ENCODE measurements at regions of chr20 and their contacts with region 1.

Region 1: DNA sequence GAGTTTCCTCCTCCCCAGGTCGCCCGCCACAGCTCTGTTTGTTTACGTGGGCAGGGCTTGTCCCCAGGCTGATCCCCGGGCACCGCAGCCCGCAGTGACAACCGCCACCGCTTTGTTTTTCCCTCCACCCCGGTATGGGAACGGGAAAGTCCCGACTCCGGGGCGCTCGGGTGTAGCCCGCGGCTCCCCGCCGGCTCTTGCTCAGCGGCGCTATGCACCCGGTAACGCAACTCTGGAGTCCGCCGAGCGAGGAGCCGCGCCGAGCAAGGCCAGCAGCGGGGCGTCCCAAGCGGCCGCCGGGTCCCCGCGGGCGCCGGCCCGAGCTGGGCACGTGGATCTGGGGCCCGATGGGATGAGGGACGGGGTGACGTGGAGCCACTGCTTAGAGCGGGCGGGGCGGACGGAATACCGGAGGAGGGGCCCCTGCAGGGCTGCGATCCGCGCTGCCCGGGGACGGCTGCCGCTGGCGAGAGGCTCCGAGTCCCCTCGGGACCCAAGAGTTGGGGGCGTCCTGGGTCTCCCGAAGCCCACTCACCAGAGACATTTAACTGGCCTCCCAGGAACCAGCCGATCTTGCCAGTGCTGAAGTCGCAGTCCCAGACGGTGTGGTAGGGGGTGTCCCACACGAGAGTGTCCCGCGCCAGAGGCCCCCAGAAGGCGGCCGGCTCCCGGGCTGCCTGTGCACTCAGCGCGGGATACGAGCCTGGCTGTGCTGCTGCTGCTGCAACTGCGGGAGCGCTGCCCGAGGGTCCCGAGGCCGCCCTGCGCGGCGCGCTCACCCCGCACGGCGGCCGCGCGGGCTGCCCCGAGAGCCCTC is 497 bp downstream of the ACSS1 start:
- DNase-seq: peak; percentile 89
- ATAC-seq: peak; percentile 41
- H3K4me3 ChIP-seq: peak overlapping the region; percentile 45 to 91 (median 76)
- H3K4me3 Mint-ChIP-seq: peak overlapping the region; percentile 93
- H3K27ac ChIP-seq: peak overlapping the region; percentile 90 to 93
- H3K27ac Mint-ChIP-seq: peak overlapping the region; percentile 97
- H3K4me1 ChIP-seq: peaks cover 58 to 63% of the 10 kb centered on the region in 2 donors
- H3K4me1 Mint-ChIP-seq: peaks cover 60% of the 10 kb centered on the region
- H3K27me3 ChIP-seq: no peaks in the 10 kb centered on the region
- H3K27me3 Mint-ChIP-seq: no peaks in the 10 kb centered on the region
- CTCF ChIP-seq: no peak

Region 2: DNA sequence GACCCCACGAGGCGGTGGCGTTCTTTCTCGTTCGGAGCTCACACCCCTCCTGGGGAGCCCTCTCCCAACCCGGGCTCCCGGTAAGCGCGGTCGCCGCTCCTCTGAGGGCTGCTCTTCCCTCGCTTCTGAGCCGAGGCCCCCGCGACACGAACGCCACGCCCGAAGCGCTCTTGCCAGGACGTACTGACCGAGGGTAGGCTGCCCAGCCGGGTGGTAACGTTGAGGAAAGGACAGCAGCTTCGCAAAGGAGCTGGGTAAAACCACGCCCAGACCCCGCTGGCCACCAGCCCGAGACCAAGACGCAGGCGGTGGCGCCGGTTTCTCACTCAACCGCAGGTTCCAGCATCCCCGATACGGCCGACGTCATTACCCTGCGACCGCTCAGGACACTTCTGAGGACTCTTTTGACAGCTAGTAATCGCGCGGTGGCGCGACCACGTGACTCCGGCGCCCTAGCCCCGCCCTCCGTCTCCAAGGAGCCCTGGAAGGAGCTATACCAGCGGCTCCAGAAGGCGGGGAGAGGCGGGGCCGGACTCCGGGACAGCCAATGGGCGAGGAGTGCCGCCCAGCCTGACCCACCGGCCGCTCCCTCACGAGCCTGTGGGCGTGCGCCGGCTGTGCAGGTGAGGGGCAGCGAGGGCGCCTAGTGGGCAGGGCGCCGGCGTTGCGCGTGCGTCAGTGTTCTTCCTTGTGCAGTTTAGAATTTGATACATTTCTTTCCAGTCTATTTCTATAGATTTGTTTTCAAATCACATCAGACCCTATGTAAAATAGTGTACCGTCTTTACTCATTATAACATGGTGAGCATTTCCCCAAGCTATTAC is 1699.5 kb before region 1 on chr20:
- CTCF ChIA-PET with region 1: no interaction called
- POLR2A ChIA-PET with region 1: no interaction called
- intact Hi-C with region 1: loop called (anchors 5 kb)
- DNase-seq: peak; percentile 100
- ATAC-seq: peak; percentile 75
- H3K4me3 ChIP-seq: peak overlapping the region; percentile 68 to 88 (median 83)
- H3K4me3 Mint-ChIP-seq: peak overlapping the region; percentile 94
- H3K27ac ChIP-seq: peak overlapping the region; percentile 94 to 98
- H3K27ac Mint-ChIP-seq: peak overlapping the region; percentile 97
- H3K4me1 ChIP-seq: peaks cover 20 to 33% of the 10 kb centered on the region in 2 donors
- H3K4me1 Mint-ChIP-seq: peaks cover 33% of the 10 kb centered on the region
- H3K27me3 ChIP-seq: no peaks in the 10 kb centered on the region
- H3K27me3 Mint-ChIP-seq: no peaks in the 10 kb centered on the region
- CTCF ChIP-seq: no peak

Region 3: GRCh38 chr20:25032478-25033280 is 24.8 kb before region 1 on chr20:
- CTCF ChIA-PET with region 1: interaction called, 10 read pairs
- POLR2A ChIA-PET with region 1: interaction called, 20 read pairs
- intact Hi-C with region 1: no loop called
- DNase-seq: no peak
- ATAC-seq: no peak
- H3K4me3 ChIP-seq: no peak overlapping the region
- H3K4me3 Mint-ChIP-seq: no peak overlapping the region
- H3K27ac ChIP-seq: no peak overlapping the region
- H3K27ac Mint-ChIP-seq: no peak overlapping the region
- H3K4me1 ChIP-seq: peaks cover 27% of the 10 kb centered on the region in 2 donors
- H3K4me1 Mint-ChIP-seq: peaks cover 40% of the 10 kb centered on the region
- H3K27me3 ChIP-seq: no peaks in the 10 kb centered on the region
- H3K27me3 Mint-ChIP-seq: no peaks in the 10 kb centered on the region
- CTCF ChIP-seq: no peak

Region 4: DNA sequence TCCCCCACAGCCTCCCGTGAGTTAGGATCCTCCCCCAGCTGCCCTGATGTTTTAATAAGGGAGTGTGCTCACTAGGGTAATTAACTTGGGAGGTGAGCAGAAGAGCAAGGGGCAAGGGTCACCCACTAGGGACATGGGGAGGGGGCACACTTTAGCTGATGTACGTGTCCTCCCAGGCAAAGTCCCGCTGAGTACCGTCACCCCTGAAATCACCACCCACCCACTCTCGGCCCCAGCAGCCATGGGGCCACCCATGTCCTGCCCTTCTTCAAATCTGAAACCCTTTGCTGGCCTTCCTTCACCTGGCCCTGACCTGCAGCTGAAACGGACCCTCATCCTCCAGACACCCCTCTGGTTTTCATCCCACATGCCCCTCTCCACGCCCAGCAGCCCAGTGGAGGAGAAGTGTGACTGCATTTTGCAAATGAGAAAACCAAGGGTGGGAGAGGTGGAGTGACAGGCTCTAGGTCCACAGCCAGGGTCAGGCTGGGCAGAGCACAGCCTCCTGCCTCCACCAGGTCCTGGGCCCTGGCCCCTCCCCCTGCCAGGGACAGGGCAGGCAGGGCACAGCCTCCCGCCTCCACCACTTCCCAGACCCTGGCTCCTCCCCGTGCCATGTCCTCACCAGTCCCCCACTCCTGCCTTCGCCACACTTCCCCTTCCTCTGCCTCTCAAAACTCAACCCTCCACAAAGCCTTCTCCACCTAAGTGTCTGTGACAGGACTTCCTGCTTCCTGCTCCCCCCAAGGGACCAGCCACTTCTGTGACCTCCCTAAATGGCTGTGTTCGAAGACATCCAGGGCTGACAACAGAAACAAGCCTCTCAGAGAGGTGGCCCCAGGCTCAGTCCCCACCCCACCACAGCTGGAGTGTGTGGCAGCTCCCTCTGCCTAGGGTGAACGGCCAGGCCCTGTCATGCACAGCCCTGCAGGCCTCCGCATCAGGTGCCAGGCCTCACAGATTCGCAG is 14.6 kb before region 1 on chr20:
- CTCF ChIA-PET with region 1: interaction called, 4 read pairs
- POLR2A ChIA-PET with region 1: interaction called, 27 read pairs
- intact Hi-C with region 1: loop called (anchors 1 kb)
- DNase-seq: peak; percentile 85
- ATAC-seq: peak; percentile 90
- H3K4me3 ChIP-seq: peak overlapping the region in 4 of 5 experiments; percentile 5 to 25 (median 18)
- H3K4me3 Mint-ChIP-seq: peak overlapping the region; percentile 72
- H3K27ac ChIP-seq: peak overlapping the region; percentile 92 to 93
- H3K27ac Mint-ChIP-seq: peak overlapping the region; percentile 90
- H3K4me1 ChIP-seq: peaks cover 58 to 62% of the 10 kb centered on the region in 2 donors
- H3K4me1 Mint-ChIP-seq: peaks cover 63% of the 10 kb centered on the region
- H3K27me3 ChIP-seq: no peaks in the 10 kb centered on the region
- H3K27me3 Mint-ChIP-seq: no peaks in the 10 kb centered on the region
- CTCF ChIP-seq: no peak

Region 5: GRCh38 chr20:25195014-25195961 is 137.8 kb after region 1 on chr20 and contains the start of gene ENTPD6:
- CTCF ChIA-PET with region 1: no interaction called
- POLR2A ChIA-PET with region 1: interaction called, 3 read pairs
- intact Hi-C with region 1: loop called (anchors 1 kb)
- DNase-seq: peak; percentile 95
- ATAC-seq: peak; percentile 85
- H3K4me3 ChIP-seq: peak within 1 kb of the TSS; percentile 55 to 91 (median 88)
- H3K4me3 Mint-ChIP-seq: peak within 1 kb of the TSS; percentile 94
- H3K27ac ChIP-seq: peak within 1 kb of the TSS; percentile 63 to 86
- H3K27ac Mint-ChIP-seq: peak within 1 kb of the TSS; percentile 92
- H3K4me1 ChIP-seq: peaks cover 15 to 24% of the 10 kb centered on the region in 2 donors
- H3K4me1 Mint-ChIP-seq: peaks cover 37% of the 10 kb centered on the region
- H3K27me3 ChIP-seq: no peaks in the 10 kb centered on the region
- H3K27me3 Mint-ChIP-seq: peaks cover 1% of the 10 kb centered on the region
- CTCF ChIP-seq: no peak
- total RNA-seq, gene ENTPD6: 64.4 and 71.3 TPM in 2 replicates

Region 6: GRCh38 chr20:25623736-25624499 is 566.5 kb after region 1 on chr20 and contains the start of gene NANP:
- CTCF ChIA-PET with region 1: no interaction called
- POLR2A ChIA-PET with region 1: no interaction called
- intact Hi-C with region 1: loop called (anchors 5 kb)
- DNase-seq: peak; percentile 95
- ATAC-seq: peak; percentile 84
- H3K4me3 ChIP-seq: peak within 1 kb of the TSS; percentile 70 to 97 (median 89)
- H3K4me3 Mint-ChIP-seq: peak within 1 kb of the TSS; percentile 98
- H3K27ac ChIP-seq: peak within 1 kb of the TSS; percentile 68 to 90
- H3K27ac Mint-ChIP-seq: peak within 1 kb of the TSS; percentile 98
- H3K4me1 ChIP-seq: peaks cover 18% of the 10 kb centered on the region in 2 donors
- H3K4me1 Mint-ChIP-seq: peaks cover 32% of the 10 kb centered on the region
- H3K27me3 ChIP-seq: no peaks in the 10 kb centered on the region
- H3K27me3 Mint-ChIP-seq: no peaks in the 10 kb centered on the region
- CTCF ChIP-seq: no peak
- total RNA-seq, gene NANP: 1.8 and 2.3 TPM in 2 replicates